Pancreas (tissue), 10 donors: ENCODE measurements at regions of chr9 and their contacts with region 1.

Region 1: GRCh38 chr9:17810728-17811571 is 232.1 kb downstream of the SH3GL2 start:
- DNase-seq: peak in 4 of 6 donors; percentile 10 to 51 (median 27)
- ATAC-seq: peak in 3 of 4 donors; percentile 62 to 71 (median 70)
- H3K4me3 ChIP-seq: no peak overlapping the region
- H3K27ac ChIP-seq: no peak overlapping the region
- H3K4me1 ChIP-seq: no peaks in the 10 kb centered on the region
- H3K27me3 ChIP-seq: no peaks in the 10 kb centered on the region
- CTCF ChIP-seq: peak; percentile 46 to 79 (median 78)

Region 2: DNA sequence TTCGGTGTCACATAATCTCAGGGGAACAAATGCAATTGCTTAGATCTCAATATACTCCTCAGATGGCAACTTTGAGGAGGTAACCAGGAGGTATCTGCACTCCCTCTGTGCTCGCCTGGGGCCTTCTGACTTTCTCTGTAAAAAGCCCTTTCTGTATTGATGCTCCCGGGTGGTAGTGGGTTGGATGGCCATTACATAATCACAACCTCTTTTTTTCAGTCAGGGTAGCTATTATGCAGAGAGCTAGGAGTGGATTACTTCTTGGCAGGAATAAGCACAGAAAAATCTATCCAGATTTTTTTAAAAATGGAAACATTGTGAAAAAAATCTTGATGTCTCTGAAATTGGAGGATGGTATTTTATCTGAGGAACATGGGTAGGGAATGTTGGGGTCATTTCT is 115.5 kb before region 1 on chr9:
- intact Hi-C with region 1: no loop called
- DNase-seq: no peak
- ATAC-seq: no peak
- H3K4me3 ChIP-seq: no peak overlapping the region
- H3K27ac ChIP-seq: no peak overlapping the region
- H3K4me1 ChIP-seq: no peaks in the 10 kb centered on the region
- H3K27me3 ChIP-seq: no peaks in the 10 kb centered on the region
- CTCF ChIP-seq: no peak

Region 3: GRCh38 chr9:17824191-17824590 is 13.2 kb after region 1 on chr9:
- intact Hi-C with region 1: no loop called
- DNase-seq: no peak
- ATAC-seq: peak in 3 of 4 donors; percentile 39 to 77 (median 55)
- H3K4me3 ChIP-seq: no peak overlapping the region
- H3K27ac ChIP-seq: no peak overlapping the region
- H3K4me1 ChIP-seq: no peaks in the 10 kb centered on the region
- H3K27me3 ChIP-seq: no peaks in the 10 kb centered on the region
- CTCF ChIP-seq: no peak

Region 4: DNA sequence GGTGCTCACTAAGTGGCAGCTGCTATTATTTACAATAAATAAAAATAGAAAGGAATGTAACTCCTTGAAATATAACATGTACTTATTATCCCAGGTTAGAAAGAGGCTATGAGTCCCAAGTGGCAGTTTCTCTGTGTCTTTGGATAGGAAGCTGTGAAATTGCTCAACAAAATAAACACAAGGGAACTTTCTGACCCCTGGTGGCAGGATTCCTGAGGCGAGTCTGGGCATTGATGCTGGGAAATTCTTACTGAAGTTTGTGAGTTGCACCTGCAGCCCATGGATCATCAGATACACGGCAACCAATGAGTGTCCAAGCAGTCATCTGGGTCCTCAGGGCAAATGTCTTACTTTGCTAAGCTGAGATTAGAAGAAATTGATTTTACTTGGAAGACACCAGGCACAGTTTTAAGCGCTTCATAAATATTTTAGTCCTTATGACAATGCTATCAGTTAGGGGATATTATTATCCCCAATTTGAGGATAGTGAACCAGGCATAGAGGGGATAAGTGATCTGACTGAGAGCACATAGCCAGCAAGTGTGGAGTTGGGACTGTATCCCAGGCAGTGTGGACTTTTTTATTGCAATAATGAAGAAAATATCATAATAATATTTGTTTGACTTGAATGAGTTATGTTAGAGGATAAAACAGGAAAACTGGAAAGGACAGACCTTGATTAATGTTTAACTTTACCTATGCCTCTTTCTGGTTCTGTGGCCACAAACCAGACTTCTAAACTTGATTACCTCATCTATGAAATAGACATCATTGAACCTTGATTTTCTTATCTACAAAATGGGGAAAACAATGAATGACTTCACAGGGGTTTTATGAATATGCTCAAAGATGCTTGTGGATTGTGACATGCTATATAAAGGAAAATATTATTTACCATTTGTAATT is 397.5 kb after region 1 on chr9:
- intact Hi-C with region 1: loop called in 1 of 3 experiments (anchors 5 kb)
- DNase-seq: peak in 5 of 6 donors; percentile 17 to 64 (median 39)
- ATAC-seq: peak; percentile 77 to 94 (median 90)
- H3K4me3 ChIP-seq: no peak overlapping the region
- H3K27ac ChIP-seq: peak overlapping the region in 1 of 4 donors; percentile 34
- H3K4me1 ChIP-seq: peaks cover 0 to 12% (median 10%) of the 10 kb centered on the region in 3 donors
- H3K27me3 ChIP-seq: no peaks in the 10 kb centered on the region
- CTCF ChIP-seq: peak; percentile 11 to 46 (median 40)

Region 5: GRCh38 chr9:18215626-18216025 is 404.7 kb after region 1 on chr9:
- intact Hi-C with region 1: loop called in 2 of 3 experiments (anchors 5 kb)
- DNase-seq: no peak
- ATAC-seq: no peak
- H3K4me3 ChIP-seq: no peak overlapping the region
- H3K27ac ChIP-seq: no peak overlapping the region
- H3K4me1 ChIP-seq: no peaks in the 10 kb centered on the region
- H3K27me3 ChIP-seq: no peaks in the 10 kb centered on the region
- CTCF ChIP-seq: no peak